Activated naive CD8-positive, alpha-beta T cell treated with anti-CD3 and anti-CD28 coated beads, Interleukin-2, amount 10 ng/mL, durations not matched to agents 7 days and 5 days (primary cell): ENCODE measurements at regions of chr11 and their contacts with region 1.

Region 1: GRCh38 chr11:62841361-62842184 is 2.2 kb upstream of the WDR74 start:
- DNase-seq: peak; percentile 81
- ATAC-seq: peak; percentile 69
- H3K4me3 Mint-ChIP-seq: no peak overlapping the region
- H3K27ac Mint-ChIP-seq: no peak overlapping the region
- H3K4me1 Mint-ChIP-seq: peaks cover 20% of the 10 kb centered on the region
- H3K27me3 Mint-ChIP-seq: no peaks in the 10 kb centered on the region

Region 2: GRCh38 chr11:62573592-62574362 is 267.8 kb before region 1 on chr11 and contains the start of gene EEF1G:
- POLR2A ChIA-PET with region 1: interaction called, 12 read pairs
- DNase-seq: peak; percentile 94
- ATAC-seq: peak; percentile 95
- H3K4me3 Mint-ChIP-seq: peak within 1 kb of the TSS; percentile 99
- H3K27ac Mint-ChIP-seq: peak within 1 kb of the TSS; percentile 95
- H3K4me1 Mint-ChIP-seq: peaks cover 41% of the 10 kb centered on the region
- H3K27me3 Mint-ChIP-seq: no peaks in the 10 kb centered on the region
- total RNA-seq, gene EEF1G: 1,132 to 1,152 TPM

Region 3: DNA sequence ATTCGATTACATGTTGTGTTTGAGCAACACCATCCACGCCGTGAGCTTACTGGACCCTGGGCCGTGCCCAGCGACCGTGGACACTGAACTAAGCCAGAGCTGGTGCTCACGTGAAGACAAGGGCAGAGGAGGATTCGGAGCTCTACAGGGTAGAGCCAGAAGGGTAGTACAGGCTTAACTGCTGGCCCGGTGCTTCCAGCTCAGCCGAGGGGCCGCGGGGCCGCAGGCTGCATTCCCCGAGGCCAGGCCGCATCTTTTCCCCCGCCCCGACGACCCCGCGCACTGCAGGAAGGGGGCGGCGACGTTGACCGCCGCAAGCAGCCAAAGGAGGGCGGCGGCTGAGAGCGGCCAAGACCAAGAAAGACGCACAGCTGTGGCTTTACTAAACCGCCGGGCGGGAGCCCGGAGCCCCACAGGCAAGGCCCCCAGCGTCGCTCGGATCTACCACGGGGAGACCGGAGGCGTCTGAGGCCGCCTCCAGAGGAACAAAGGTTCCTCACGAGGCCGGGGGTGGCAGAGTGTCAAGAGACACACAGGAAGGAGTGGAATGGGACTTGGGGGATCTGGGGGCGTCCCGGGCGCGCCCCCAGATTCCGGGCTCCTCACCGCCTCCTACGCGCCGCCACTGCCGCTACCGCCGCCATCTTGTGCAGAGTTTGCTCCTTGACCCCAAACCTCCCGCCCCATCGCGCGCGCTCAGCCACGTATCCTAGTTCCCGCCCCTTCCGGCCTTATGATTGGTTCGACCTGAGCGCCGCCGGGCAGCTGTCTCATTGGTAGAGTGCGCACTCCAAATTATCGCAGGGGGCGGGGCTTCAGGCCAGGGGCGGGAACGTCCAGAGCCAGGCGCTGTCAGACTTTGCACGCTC is 195.4 kb before region 1 on chr11 and contains the start of gene GANAB:
- POLR2A ChIA-PET with region 1: interaction called, 21 read pairs
- DNase-seq: peak; percentile 96
- ATAC-seq: peak; percentile 98
- H3K4me3 Mint-ChIP-seq: peak within 1 kb of the TSS; percentile 99
- H3K27ac Mint-ChIP-seq: peak within 1 kb of the TSS; percentile 96
- H3K4me1 Mint-ChIP-seq: peaks cover 24% of the 10 kb centered on the region
- H3K27me3 Mint-ChIP-seq: no peaks in the 10 kb centered on the region
- total RNA-seq, gene GANAB: 291 to 300 TPM

Region 4: GRCh38 chr11:62705880-62706849 is 135.4 kb before region 1 on chr11:
- POLR2A ChIA-PET with region 1: interaction called, 50 read pairs
- DNase-seq: peak; percentile 95
- ATAC-seq: peak; percentile 43
- H3K4me3 Mint-ChIP-seq: peak overlapping the region; percentile 91
- H3K27ac Mint-ChIP-seq: peak overlapping the region; percentile 73
- H3K4me1 Mint-ChIP-seq: peaks cover 39% of the 10 kb centered on the region
- H3K27me3 Mint-ChIP-seq: no peaks in the 10 kb centered on the region

Region 5: DNA sequence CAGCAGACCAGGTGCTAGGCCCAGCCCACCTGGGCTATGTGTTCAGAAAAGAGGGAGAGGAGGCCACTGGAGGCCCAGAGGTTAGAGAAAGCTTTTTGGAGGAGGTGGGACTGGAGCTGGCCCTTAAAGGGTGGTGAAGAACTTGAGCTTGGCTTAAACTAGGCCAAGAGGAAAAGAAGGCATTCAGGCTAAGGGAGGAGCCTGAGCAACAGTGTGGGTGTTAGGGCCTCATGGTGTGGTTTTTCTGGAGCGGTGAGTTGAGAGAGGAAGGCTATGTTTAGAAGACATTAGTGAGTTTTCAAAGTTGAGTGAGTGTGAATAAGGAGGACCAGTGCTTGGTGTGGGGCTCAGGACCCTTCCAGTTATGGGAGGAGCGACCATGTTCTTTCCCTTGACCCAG is 64.2 kb before region 1 on chr11:
- POLR2A ChIA-PET with region 1: interaction called, 46 read pairs
- DNase-seq: no peak
- ATAC-seq: no peak
- H3K4me3 Mint-ChIP-seq: no peak overlapping the region
- H3K27ac Mint-ChIP-seq: peak overlapping the region; percentile 75
- H3K4me1 Mint-ChIP-seq: peaks cover 9% of the 10 kb centered on the region
- H3K27me3 Mint-ChIP-seq: no peaks in the 10 kb centered on the region

Region 6: DNA sequence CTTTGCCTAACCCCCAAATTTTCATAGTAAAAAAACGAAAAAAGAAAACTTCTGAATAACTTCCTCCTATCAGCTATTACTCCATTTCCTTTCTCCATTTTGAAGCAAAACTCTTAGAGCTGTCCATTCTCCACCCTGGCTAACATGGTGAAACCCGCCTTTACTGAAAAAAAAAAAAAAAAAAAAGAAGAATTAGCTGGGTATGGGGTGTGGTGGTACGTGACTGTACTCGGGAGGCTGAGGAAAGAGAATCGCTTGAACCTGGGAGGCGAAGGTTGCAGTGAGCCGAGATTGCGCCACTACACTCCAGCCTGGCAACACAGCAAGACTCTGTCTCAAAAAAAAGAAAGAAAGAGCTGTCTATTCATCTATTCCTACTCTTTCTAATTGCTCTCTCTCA is 25.0 kb before region 1 on chr11:
- POLR2A ChIA-PET with region 1: interaction called, 13 read pairs
- DNase-seq: no peak
- ATAC-seq: no peak
- H3K4me3 Mint-ChIP-seq: no peak overlapping the region
- H3K27ac Mint-ChIP-seq: no peak overlapping the region
- H3K4me1 Mint-ChIP-seq: peaks cover 1% of the 10 kb centered on the region
- H3K27me3 Mint-ChIP-seq: no peaks in the 10 kb centered on the region

Region 7: GRCh38 chr11:62880803-62881578 is 39.4 kb after region 1 on chr11 and contains the start of gene SLC3A2:
- POLR2A ChIA-PET with region 1: interaction called, 104 read pairs
- DNase-seq: peak; percentile 93
- ATAC-seq: peak; percentile 83
- H3K4me3 Mint-ChIP-seq: peak within 1 kb of the TSS; percentile 100
- H3K27ac Mint-ChIP-seq: peak within 1 kb of the TSS; percentile 100
- H3K4me1 Mint-ChIP-seq: peaks cover 40% of the 10 kb centered on the region
- H3K27me3 Mint-ChIP-seq: no peaks in the 10 kb centered on the region
- total RNA-seq, gene SLC3A2: 222 to 228 TPM

Region 8: GRCh38 chr11:62958547-62959421 is 117.2 kb after region 1 on chr11:
- POLR2A ChIA-PET with region 1: no interaction called
- DNase-seq: no peak
- ATAC-seq: no peak
- H3K4me3 Mint-ChIP-seq: no peak overlapping the region
- H3K27ac Mint-ChIP-seq: no peak overlapping the region
- H3K4me1 Mint-ChIP-seq: no peaks in the 10 kb centered on the region
- H3K27me3 Mint-ChIP-seq: peaks cover 11% of the 10 kb centered on the region